GM12878 (cell line): ENCODE measurements at regions of chr11 and their contacts with region 1.

Region 1: GRCh38 chr11:95296621-95297025 is 65.6 kb upstream of the SESN3 start:
- DNase-seq: peak; percentile 39
- ATAC-seq: peak; percentile 97
- H3K4me3 ChIP-seq: peak overlapping the region; percentile 24; the same call in 1 of the 2 replicates
- H3K27ac ChIP-seq: no peak overlapping the region
- H3K4me1 ChIP-seq: peaks cover 15% of the 10 kb centered on the region; the same call in 1 of the 2 replicates
- H3K27me3 ChIP-seq: no peaks in the 10 kb centered on the region; a peak in 4 of 4 replicates
- CTCF ChIP-seq: no peak
- EP300 ChIP-seq: no peak; a peak in 1 of 4 replicates
- POLR2A ChIP-seq: no peak
- RAD21 ChIP-seq: peak; percentile 9; the same call in 1 of the 2 replicates

Region 2: GRCh38 chr11:95108671-95109551 is 187.7 kb before region 1 on chr11:
- CTCF ChIA-PET with region 1: no interaction called
- POLR2A ChIA-PET with region 1: no interaction called
- RAD21 ChIA-PET with region 1: no interaction called
- SMC1A ChIA-PET with region 1: no interaction called
- in situ Hi-C with region 1: no loop called
- intact Hi-C with region 1: no loop called
- DNase-seq: no peak
- ATAC-seq: no peak
- H3K4me3 ChIP-seq: no peak overlapping the region
- H3K27ac ChIP-seq: no peak overlapping the region
- H3K4me1 ChIP-seq: no peaks in the 10 kb centered on the region
- H3K27me3 ChIP-seq: no peaks in the 10 kb centered on the region
- CTCF ChIP-seq: no peak
- EP300 ChIP-seq: no peak
- POLR2A ChIP-seq: no peak
- RAD21 ChIP-seq: no peak

Region 3: DNA sequence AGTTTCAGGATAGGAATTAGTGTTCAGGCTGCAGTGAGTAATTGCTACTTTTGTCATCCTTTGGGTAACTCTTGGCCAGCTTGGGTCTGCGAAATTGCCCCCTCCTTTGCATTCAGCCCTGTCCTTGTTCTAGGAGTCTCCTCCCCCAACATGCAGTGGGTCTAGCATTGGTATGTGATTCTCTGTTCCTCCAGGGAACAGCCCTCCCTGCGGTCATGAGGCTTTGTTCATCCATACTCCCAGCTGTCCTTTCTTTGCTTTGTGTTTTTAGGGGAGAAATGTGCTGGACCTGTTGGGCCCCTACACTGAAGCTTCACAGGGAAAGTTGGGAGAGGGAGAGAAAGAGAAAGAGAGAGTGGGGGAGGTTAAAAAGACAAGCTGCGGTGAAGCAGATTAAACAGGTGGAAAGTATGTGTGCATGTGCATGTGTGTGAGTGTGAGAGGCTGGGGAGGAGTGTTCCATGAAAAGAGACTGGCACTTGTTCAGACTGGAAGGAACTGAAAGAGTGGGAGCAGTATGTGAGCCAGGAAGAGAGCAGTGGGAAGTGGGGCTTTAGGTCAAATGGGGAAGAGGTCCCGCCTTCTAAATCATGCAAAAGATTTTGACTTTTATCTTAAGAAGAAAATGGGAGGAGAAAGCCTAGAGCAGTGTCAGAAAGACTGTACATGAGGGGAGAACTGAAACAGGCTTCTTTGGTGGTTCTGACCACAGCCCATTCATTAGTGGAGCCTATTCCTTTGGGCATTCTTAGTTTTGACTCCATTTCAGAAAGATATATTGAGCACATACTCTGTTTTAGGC is 47.8 kb before region 1 on chr11:
- CTCF ChIA-PET with region 1: interaction called, 5 read pairs
- POLR2A ChIA-PET with region 1: interaction called, 4 read pairs
- RAD21 ChIA-PET with region 1: interaction called, 24 read pairs
- SMC1A ChIA-PET with region 1: interaction called, 5 read pairs
- in situ Hi-C with region 1: no loop called
- intact Hi-C with region 1: loop called (anchors 2 kb)
- DNase-seq: peak; percentile 74
- ATAC-seq: peak; percentile 85
- H3K4me3 ChIP-seq: peak overlapping the region; percentile 41; the same call in 1 of the 2 replicates
- H3K27ac ChIP-seq: peak overlapping the region; percentile 63
- H3K4me1 ChIP-seq: peaks cover 35% of the 10 kb centered on the region
- H3K27me3 ChIP-seq: no peaks in the 10 kb centered on the region
- CTCF ChIP-seq: no peak
- EP300 ChIP-seq: peak in 1 of 2 experiments; percentile 73; a peak in 1 of 4 replicates
- POLR2A ChIP-seq: no peak
- RAD21 ChIP-seq: no peak